Activated CD4-positive, alpha-beta memory T cell treated with anti-CD3 and anti-CD28 coated beads, Interleukin-2, amount 10 ng/mL, durations not matched to agents 7 days and 5 days (primary cell): ENCODE measurements at regions of chr7 and their contacts with region 1.

Region 1: DNA sequence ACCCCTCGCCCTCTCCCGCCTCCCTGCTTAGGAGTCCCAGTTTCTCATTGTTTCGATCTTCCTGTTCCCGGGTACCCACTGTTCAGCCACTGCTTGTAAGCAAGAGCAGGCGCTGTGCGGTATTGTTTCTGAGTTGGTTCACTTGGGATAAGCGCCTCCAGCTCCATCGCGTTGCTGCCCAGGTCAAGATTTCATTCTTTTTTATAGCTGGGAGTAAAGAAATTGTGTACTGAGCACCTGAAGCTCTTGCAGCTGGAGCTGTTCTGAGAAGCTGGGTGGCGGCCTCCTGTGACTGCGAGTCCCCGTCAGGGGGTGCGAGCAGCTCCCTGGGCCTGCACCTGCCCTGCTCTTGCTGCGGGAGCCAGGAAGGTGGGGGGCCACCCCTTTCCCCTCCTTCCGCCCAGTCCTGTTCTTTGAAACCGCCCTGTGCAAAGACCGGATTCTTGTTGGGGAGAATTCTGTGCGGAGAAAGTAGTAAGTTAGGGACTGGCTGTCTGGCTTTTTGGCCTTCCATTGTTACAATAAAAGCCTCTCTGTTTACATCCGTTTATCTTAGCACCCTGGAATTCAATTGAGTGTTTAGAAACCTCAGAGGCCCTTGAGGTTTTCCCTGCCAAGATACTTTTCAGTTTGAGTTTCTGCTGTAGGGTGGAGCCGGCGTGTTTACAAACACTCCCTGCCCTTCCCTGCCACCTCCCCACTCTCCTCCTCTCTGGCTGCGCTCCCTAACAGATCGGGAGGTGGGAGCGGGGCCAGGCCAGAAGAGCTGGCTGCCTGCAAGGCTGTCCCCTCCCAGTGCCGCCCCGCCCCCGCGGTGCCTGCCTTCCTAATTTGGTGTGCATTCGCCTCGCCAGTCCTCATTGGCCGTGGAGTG is 30.8 kb upstream of the AP5Z1 start:
- DNase-seq: peak; percentile 81
- H3K4me3 Mint-ChIP-seq: peak overlapping the region; percentile 85
- H3K27ac Mint-ChIP-seq: peak overlapping the region; percentile 98
- H3K4me1 Mint-ChIP-seq: peaks cover 64% of the 10 kb centered on the region
- H3K27me3 Mint-ChIP-seq: no peaks in the 10 kb centered on the region

Region 2: GRCh38 chr7:4681886-4682620 is 62.6 kb before region 1 on chr7 and contains the start of gene FOXK1:
- CTCF ChIA-PET with region 1: interaction called, 3 read pairs
- POLR2A ChIA-PET with region 1: interaction called, 25 read pairs
- DNase-seq: peak; percentile 80
- H3K4me3 Mint-ChIP-seq: peak within 1 kb of the TSS; percentile 98
- H3K27ac Mint-ChIP-seq: peak within 1 kb of the TSS; percentile 99
- H3K4me1 Mint-ChIP-seq: peaks cover 24% of the 10 kb centered on the region
- H3K27me3 Mint-ChIP-seq: no peaks in the 10 kb centered on the region
- total RNA-seq, gene FOXK1: 32.7 to 33.2 TPM

Region 3: GRCh38 chr7:4725014-4725849 is 19.4 kb before region 1 on chr7:
- CTCF ChIA-PET with region 1: interaction called, 3 read pairs
- POLR2A ChIA-PET with region 1: interaction called, 13 read pairs
- DNase-seq: peak; percentile 58
- H3K4me3 Mint-ChIP-seq: peak overlapping the region; percentile 67
- H3K27ac Mint-ChIP-seq: peak overlapping the region; percentile 71
- H3K4me1 Mint-ChIP-seq: peaks cover 26% of the 10 kb centered on the region
- H3K27me3 Mint-ChIP-seq: no peaks in the 10 kb centered on the region